Naive thymus-derived CD4-positive, alpha-beta T cell (primary cell): ENCODE measurements at regions of chr16 and their contacts with region 1.

Region 1: DNA sequence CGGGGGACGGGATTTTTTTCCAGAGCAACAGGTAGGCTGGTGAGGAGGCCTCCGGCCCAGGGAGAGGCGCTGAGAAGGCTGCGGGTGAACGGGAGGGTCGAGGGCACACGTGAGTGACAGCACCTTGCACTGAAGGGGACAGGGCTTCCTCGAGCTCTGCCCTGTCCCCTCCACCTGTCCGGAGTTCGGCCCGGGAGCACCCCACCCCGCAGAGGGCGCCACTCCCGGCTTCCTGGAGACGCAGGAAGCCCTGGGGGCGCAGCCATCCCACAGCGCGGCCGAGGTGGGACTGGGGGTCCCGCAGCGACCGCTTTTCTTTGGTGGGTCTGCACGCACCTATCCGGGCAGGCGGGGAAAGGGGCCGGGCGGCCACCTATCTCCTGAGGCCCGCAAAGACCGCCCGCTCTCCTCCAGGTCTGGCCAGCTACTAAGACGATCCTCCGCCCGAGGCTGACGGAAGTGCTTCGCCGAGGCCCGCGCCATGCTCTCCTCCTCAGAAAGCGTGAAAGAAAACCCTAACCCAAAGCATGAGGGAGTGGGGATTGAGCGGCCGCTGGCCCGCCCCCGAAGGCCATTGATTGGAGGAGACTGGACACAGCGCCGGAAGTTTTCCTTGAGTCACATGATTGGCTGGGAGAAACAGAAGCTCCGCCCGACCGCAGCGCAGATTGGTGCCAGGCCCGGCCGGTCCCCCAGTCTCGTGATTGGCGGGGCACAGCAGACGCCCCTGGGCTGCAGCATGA is 34.3 kb downstream of the DDX19A start:
- DNase-seq: peak; percentile 83 to 97 (median 96)
- ATAC-seq: peak; percentile 96
- H3K4me3 ChIP-seq: peak overlapping the region; percentile 86
- H3K4me3 Mint-ChIP-seq: peak overlapping the region; percentile 89 to 100 (median 97)
- H3K27ac ChIP-seq: peak overlapping the region; percentile 83
- H3K27ac Mint-ChIP-seq: peak overlapping the region; percentile 92 to 98 (median 94)
- H3K4me1 ChIP-seq: peaks cover 9 to 13% of the 10 kb centered on the region in 2 donors
- H3K4me1 Mint-ChIP-seq: peaks cover 0 to 26% (median 24%) of the 10 kb centered on the region in 7 donors
- H3K27me3 ChIP-seq: no peaks in the 10 kb centered on the region
- H3K27me3 Mint-ChIP-seq: no peaks in the 10 kb centered on the region

Region 2: DNA sequence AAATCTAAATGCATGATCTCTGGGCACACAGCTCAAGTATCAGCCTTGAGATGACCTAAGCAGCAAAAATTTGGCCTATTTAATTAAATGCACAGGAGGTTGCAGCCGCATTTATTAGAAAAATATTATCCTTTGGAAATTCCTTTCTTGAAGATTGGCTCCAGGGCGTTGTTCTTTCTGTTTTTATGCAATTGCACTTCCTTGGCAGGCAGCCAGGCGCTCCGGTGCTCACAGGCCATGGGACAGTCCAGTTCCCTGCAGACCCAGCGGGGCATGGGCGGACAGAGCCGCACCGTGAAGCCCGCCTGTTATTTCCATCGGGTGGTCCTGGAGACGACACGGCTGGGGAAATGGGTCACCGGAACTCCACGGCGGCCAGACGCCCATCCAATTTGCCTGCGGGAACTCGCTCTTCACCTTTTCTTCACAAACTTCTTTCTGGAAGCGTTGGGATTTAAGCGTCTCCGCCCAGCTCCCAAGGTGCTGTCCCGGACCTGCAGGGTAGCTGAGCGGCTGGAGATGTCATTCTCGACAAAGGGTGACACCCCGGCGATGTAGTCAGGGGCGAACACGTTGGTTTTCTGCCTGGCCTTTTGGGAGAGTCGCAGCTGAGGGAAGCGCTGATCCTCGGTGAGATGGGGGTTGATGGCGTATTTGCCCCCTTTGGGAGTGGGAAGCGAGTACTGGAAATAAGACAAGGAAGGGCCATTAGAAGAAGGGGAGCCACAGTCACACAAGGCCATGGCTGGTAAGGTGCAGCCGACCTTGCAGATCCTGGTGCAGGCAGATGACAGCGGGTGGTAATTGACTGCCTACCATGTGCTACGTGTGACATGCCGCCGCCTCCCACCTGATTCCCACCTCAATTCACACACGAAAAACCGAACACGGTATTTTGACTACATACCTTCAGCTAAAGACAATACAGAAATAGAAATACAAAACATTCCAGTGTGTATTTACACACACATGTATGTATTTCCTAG is 638.8 kb before region 1 on chr16:
- CTCF ChIA-PET with region 1: no interaction called
- POLR2A ChIA-PET with region 1: no interaction called
- intact Hi-C with region 1: no loop called
- DNase-seq: no peak
- ATAC-seq: no peak
- H3K4me3 ChIP-seq: no peak overlapping the region
- H3K4me3 Mint-ChIP-seq: no peak overlapping the region
- H3K27ac ChIP-seq: no peak overlapping the region
- H3K27ac Mint-ChIP-seq: no peak overlapping the region
- H3K4me1 ChIP-seq: no peaks in the 10 kb centered on the region
- H3K4me1 Mint-ChIP-seq: peaks cover 0 to 8% (median 0%) of the 10 kb centered on the region in 7 donors
- H3K27me3 ChIP-seq: no peaks in the 10 kb centered on the region
- H3K27me3 Mint-ChIP-seq: no peaks in the 10 kb centered on the region

Region 3: GRCh38 chr16:70251629-70252354 is 129.2 kb before region 1 on chr16 and contains the start of gene EXOSC6:
- CTCF ChIA-PET with region 1: no interaction called
- POLR2A ChIA-PET with region 1: interaction called, 5 read pairs
- intact Hi-C with region 1: loop called in 1 of 2 experiments (anchors 2 kb)
- DNase-seq: peak; percentile 85 to 94 (median 93)
- ATAC-seq: peak; percentile 99
- H3K4me3 ChIP-seq: peak within 1 kb of the TSS; percentile 67
- H3K4me3 Mint-ChIP-seq: peak within 1 kb of the TSS; percentile 82 to 93 (median 90)
- H3K27ac ChIP-seq: peak within 1 kb of the TSS; percentile 85
- H3K27ac Mint-ChIP-seq: peak within 1 kb of the TSS; percentile 86 to 96 (median 92)
- H3K4me1 ChIP-seq: peaks cover 5 to 15% of the 10 kb centered on the region in 2 donors
- H3K4me1 Mint-ChIP-seq: peaks cover 0 to 41% (median 24%) of the 10 kb centered on the region in 7 donors
- H3K27me3 ChIP-seq: no peaks in the 10 kb centered on the region
- H3K27me3 Mint-ChIP-seq: no peaks in the 10 kb centered on the region
- total RNA-seq, gene EXOSC6: 25.5 to 45.9 (median 36.4) TPM

Region 4: DNA sequence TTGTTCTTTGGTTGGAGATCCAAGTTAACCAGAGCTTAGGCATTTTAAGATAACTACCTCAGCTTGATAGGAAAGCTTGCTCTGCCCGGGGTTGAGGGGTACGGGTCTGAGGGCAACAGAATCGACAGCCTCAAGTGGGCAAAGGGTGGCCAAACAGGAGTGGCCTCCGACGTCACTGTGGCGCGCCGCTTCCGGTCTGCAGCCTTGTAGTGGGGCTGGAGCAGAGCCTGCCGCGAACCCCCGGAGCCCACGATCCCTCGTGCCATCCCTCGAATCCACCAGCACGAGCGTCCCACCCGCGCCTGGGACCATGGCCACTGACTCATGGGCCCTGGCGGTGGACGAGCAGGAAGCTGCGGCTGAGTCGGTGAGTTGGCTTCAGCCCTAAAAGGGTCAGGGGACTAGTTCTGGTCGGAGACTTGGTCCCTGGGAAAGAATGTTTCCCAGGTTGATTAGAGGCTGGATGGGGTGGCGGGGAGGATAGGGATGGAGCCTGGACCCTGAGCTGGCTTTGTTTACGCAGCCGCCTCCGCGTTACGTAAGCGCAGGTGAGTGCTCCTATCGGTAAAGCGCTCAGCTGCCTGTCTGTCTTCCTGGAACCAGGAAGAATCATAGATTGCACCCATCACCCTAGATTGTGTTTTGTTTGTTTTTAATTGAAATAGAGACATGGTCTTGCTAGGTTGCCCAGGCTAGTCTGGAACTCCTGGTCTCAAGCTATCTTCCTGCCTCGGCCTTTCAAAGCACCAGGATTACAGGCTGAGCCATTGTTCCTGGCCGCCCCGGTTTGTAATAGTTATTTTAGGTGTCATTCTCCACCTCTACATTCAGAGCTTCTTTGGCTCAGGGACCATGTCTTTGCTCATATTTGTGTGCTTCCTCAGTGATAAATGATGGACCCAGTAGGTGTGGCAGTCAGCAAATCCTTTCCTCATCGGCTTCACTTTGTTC is 81.8 kb before region 1 on chr16 and contains the start of gene DDX19B:
- CTCF ChIA-PET with region 1: interaction called, 3 read pairs
- POLR2A ChIA-PET with region 1: interaction called, 17 read pairs
- intact Hi-C with region 1: no loop called
- DNase-seq: peak; percentile 28 to 69 (median 51)
- ATAC-seq: peak; percentile 83
- H3K4me3 ChIP-seq: peak within 1 kb of the TSS; percentile 86
- H3K4me3 Mint-ChIP-seq: peak within 1 kb of the TSS; percentile 89 to 98 (median 96)
- H3K27ac ChIP-seq: peak within 1 kb of the TSS; percentile 97
- H3K27ac Mint-ChIP-seq: peak within 1 kb of the TSS; percentile 93 to 100 (median 99)
- H3K4me1 ChIP-seq: peaks cover 0 to 4% of the 10 kb centered on the region in 2 donors
- H3K4me1 Mint-ChIP-seq: peaks cover 23 to 46% (median 42%) of the 10 kb centered on the region in 7 donors
- H3K27me3 ChIP-seq: no peaks in the 10 kb centered on the region
- H3K27me3 Mint-ChIP-seq: no peaks in the 10 kb centered on the region
- total RNA-seq, gene DDX19B: 23.6 to 29.9 (median 27.8) TPM

Region 5: GRCh38 chr16:70370924-70371323 is 10.1 kb before region 1 on chr16:
- CTCF ChIA-PET with region 1: interaction called, 6 read pairs
- POLR2A ChIA-PET with region 1: interaction called, 39 read pairs
- intact Hi-C with region 1: loop called (anchors 1 kb)
- DNase-seq: no peak
- ATAC-seq: no peak
- H3K4me3 ChIP-seq: no peak overlapping the region
- H3K4me3 Mint-ChIP-seq: no peak overlapping the region
- H3K27ac ChIP-seq: no peak overlapping the region
- H3K27ac Mint-ChIP-seq: peak overlapping the region in 5 of 9 donors; percentile 42 to 70 (median 51)
- H3K4me1 ChIP-seq: peaks cover 0 to 4% of the 10 kb centered on the region in 2 donors
- H3K4me1 Mint-ChIP-seq: peaks cover 0 to 10% (median 7%) of the 10 kb centered on the region in 7 donors
- H3K27me3 ChIP-seq: no peaks in the 10 kb centered on the region
- H3K27me3 Mint-ChIP-seq: no peaks in the 10 kb centered on the region

Region 6: GRCh38 chr16:70430667-70431536 is 49.9 kb after region 1 on chr16:
- CTCF ChIA-PET with region 1: no interaction called
- POLR2A ChIA-PET with region 1: interaction called, 59 read pairs
- intact Hi-C with region 1: loop called in 1 of 2 experiments (anchors 2 kb)
- DNase-seq: peak in 8 of 9 donors; percentile 49 to 85 (median 64)
- ATAC-seq: peak; percentile 89
- H3K4me3 ChIP-seq: peak overlapping the region; percentile 29
- H3K4me3 Mint-ChIP-seq: peak overlapping the region; percentile 60 to 86 (median 78)
- H3K27ac ChIP-seq: peak overlapping the region; percentile 91
- H3K27ac Mint-ChIP-seq: peak overlapping the region; percentile 84 to 98 (median 93)
- H3K4me1 ChIP-seq: peaks cover 20 to 32% of the 10 kb centered on the region in 2 donors
- H3K4me1 Mint-ChIP-seq: peaks cover 47 to 78% (median 70%) of the 10 kb centered on the region in 7 donors
- H3K27me3 ChIP-seq: no peaks in the 10 kb centered on the region
- H3K27me3 Mint-ChIP-seq: no peaks in the 10 kb centered on the region

Region 7: GRCh38 chr16:70454222-70455034 is 73.4 kb after region 1 on chr16 and contains the start of gene FCSK:
- CTCF ChIA-PET with region 1: interaction called, 5 read pairs
- POLR2A ChIA-PET with region 1: interaction called, 30 read pairs
- intact Hi-C with region 1: loop called (anchors 1 kb)
- DNase-seq: peak; percentile 63 to 88 (median 84)
- ATAC-seq: peak; percentile 94
- H3K4me3 ChIP-seq: peak within 1 kb of the TSS; percentile 82
- H3K4me3 Mint-ChIP-seq: peak within 1 kb of the TSS; percentile 90 to 95 (median 93)
- H3K27ac ChIP-seq: peak within 1 kb of the TSS; percentile 99
- H3K27ac Mint-ChIP-seq: peak within 1 kb of the TSS; percentile 81 to 95 (median 89)
- H3K4me1 ChIP-seq: peaks cover 8 to 12% of the 10 kb centered on the region in 2 donors
- H3K4me1 Mint-ChIP-seq: peaks cover 6 to 45% (median 37%) of the 10 kb centered on the region in 7 donors
- H3K27me3 ChIP-seq: no peaks in the 10 kb centered on the region
- H3K27me3 Mint-ChIP-seq: peaks cover 0 to 3% (median 0%) of the 10 kb centered on the region in 5 donors
- total RNA-seq, gene FCSK: 23.7 to 45.2 (median 36.7) TPM

Region 8: GRCh38 chr16:70508752-70509151 is 127.7 kb after region 1 on chr16:
- CTCF ChIA-PET with region 1: no interaction called
- POLR2A ChIA-PET with region 1: no interaction called
- intact Hi-C with region 1: no loop called
- DNase-seq: peak in 2 of 9 donors; percentile 5 to 16
- ATAC-seq: peak; percentile 63
- H3K4me3 ChIP-seq: no peak overlapping the region
- H3K4me3 Mint-ChIP-seq: no peak overlapping the region
- H3K27ac ChIP-seq: no peak overlapping the region
- H3K27ac Mint-ChIP-seq: peak overlapping the region in 8 of 9 donors; percentile 35 to 87 (median 70)
- H3K4me1 ChIP-seq: no peaks in the 10 kb centered on the region
- H3K4me1 Mint-ChIP-seq: peaks cover 6 to 13% (median 9%) of the 10 kb centered on the region in 7 donors
- H3K27me3 ChIP-seq: no peaks in the 10 kb centered on the region
- H3K27me3 Mint-ChIP-seq: no peaks in the 10 kb centered on the region

Region 9: DNA sequence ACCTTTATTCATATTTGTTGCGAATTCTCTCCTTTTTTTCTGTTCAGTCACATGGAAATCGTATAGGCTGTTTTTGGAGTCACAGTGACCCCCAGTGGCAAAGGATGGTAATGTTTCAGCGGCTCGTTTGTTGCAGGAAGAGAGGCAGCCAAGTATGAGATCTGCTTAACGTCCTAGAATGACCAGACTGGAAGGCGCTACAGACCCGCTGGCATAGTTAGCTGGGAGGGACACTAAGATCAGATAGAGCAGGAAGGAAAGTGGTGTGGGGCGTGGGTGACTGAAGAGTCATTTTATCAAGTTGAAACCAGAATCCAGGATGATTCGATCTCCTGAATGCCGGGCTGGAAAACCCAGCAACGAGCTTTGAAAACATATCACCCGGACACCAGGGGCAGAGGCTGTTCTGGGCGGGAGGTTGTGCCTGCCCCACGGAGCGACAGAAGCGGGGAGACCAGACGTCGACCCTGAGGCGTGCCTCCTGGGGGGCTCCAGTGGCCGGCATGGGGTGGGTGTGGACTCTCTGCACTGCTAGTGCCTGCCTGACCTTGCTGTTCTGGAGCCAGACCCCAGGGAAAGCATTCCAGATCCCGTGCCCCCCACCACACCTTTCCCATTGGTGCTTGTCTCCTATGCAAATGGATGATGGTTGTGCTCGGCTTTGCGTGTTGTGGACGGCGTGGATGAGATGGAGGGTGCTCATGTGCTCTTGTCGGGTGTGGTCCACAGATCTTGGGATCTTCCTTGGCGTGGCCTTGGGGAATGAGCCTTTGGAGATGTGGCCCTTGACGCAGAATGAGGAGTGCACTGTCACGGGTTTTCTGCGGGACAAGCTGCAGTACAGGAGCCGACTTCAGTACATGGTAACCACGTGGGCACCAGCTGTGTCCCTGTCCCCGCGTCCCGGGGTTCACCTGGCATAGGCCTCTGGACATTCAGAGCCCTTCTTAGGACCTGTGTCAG is 273.1 kb after region 1 on chr16:
- CTCF ChIA-PET with region 1: no interaction called
- POLR2A ChIA-PET with region 1: no interaction called
- intact Hi-C with region 1: loop called in 1 of 2 experiments (anchors 5 kb)
- DNase-seq: peak; percentile 57 to 86 (median 77)
- ATAC-seq: peak; percentile 89
- H3K4me3 ChIP-seq: no peak overlapping the region
- H3K4me3 Mint-ChIP-seq: peak overlapping the region; percentile 3 to 76 (median 51)
- H3K27ac ChIP-seq: no peak overlapping the region
- H3K27ac Mint-ChIP-seq: peak overlapping the region in 4 of 9 donors; percentile 3 to 60 (median 51)
- H3K4me1 ChIP-seq: peaks cover 0 to 3% of the 10 kb centered on the region in 2 donors
- H3K4me1 Mint-ChIP-seq: peaks cover 4 to 6% (median 5%) of the 10 kb centered on the region in 7 donors
- H3K27me3 ChIP-seq: no peaks in the 10 kb centered on the region
- H3K27me3 Mint-ChIP-seq: peaks cover 0 to 3% (median 0%) of the 10 kb centered on the region in 5 donors